ENCODE measurements at regions of chr6 and their contacts with region 1.

Region 1: GRCh38 chr6:41088451-41088850 is 15.7 kb downstream of the NFYA start:
- DNase-seq: no peak
- ATAC-seq: no peak
- H3K4me3 ChIP-seq: no peak overlapping the region
- H3K27ac ChIP-seq: no peak overlapping the region
- H3K4me1 ChIP-seq: no peaks in the 10 kb centered on the region
- H3K27me3 ChIP-seq: no peaks in the 10 kb centered on the region
- CTCF ChIP-seq: no peak

Region 2: GRCh38 chr6:41318654-41319565 is 230.5 kb after region 1 on chr6:
- intact Hi-C with region 1: loop called in 1 of 2 experiments (anchors 2 kb)
- DNase-seq: peak; percentile 75 to 88
- ATAC-seq: peak; percentile 96 to 99 (median 97)
- H3K4me3 ChIP-seq: peak overlapping the region; percentile 51
- H3K27ac ChIP-seq: no peak overlapping the region
- H3K4me1 ChIP-seq: peaks cover 3% of the 10 kb centered on the region
- H3K27me3 ChIP-seq: peaks cover 0 to 15% (median 0%) of the 10 kb centered on the region in 3 donors
- CTCF ChIP-seq: peak; percentile 100